GM18951 (cell line): ENCODE measurements at regions of chr14 and their contacts with region 1.

Region 1: GRCh38 chr14:49959822-49960408 is 67.0 kb downstream of the ARF6 start:
- POLR2A ChIP-seq: no peak

Region 2: DNA sequence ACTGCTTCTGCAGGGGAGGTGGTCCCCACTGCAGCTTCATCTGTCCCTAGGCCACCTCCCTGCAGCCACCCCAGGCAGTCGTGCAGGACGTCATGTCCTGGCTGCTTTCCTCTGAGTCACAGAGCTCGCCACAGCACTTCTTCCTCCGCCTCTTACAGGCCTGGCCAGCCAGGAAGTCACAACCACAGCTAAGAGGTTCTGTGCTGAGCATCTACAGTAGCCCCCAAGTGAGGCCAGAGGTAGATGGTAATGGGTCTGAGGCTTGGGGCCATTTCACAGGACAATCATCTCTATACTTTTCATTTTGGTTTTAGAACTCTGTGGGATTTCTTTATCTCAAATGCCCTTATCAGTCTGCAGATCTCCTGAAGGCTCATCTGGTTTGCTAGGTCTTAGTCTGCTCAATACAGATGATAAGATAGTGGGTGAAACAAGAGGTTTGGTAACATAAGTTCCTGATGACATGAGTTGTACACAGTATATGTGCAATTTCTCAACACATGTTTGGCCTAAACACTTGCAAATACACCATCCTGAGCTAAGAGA is 39.4 kb after region 1 on chr14:
- in situ Hi-C with region 1: loop called (anchors 5 kb)
- POLR2A ChIP-seq: peak; percentile 67